Left cardiac atrium (tissue), 4 donors: ENCODE measurements at regions of chr3 and their contacts with region 1.

Region 1: DNA sequence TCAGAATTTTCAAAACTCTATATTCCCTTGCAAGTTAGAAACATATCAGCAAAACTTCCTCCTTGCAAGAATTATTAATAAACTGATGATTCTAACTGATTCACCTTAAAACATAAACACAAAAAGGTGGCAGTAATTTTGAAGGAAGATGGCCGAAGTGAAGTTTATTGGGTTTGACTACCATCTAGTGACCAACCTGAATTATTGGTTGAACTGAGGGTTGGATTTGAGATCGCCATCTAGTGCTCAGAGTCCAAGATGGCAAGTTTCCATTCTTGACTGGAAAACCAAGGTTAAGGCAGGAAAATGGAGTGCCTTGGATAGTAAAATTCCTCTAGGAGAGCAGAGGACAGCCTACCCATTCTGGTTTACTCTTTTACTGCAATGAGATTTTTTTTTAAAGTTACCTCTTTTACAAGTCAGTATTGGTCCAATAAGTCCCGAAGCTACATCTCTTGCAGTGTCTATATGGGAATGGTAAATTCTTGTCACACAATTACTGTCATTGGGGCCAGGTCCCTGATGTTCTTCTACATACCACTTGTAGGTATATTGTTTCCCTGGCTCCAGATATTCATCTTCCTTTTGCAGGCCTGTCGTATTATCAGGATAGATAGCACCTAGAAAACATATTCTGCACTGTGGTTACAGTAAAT is 51.6 kb upstream of the CP start:
- DNase-seq: no peak
- ATAC-seq: peak; percentile 86

Region 2: DNA sequence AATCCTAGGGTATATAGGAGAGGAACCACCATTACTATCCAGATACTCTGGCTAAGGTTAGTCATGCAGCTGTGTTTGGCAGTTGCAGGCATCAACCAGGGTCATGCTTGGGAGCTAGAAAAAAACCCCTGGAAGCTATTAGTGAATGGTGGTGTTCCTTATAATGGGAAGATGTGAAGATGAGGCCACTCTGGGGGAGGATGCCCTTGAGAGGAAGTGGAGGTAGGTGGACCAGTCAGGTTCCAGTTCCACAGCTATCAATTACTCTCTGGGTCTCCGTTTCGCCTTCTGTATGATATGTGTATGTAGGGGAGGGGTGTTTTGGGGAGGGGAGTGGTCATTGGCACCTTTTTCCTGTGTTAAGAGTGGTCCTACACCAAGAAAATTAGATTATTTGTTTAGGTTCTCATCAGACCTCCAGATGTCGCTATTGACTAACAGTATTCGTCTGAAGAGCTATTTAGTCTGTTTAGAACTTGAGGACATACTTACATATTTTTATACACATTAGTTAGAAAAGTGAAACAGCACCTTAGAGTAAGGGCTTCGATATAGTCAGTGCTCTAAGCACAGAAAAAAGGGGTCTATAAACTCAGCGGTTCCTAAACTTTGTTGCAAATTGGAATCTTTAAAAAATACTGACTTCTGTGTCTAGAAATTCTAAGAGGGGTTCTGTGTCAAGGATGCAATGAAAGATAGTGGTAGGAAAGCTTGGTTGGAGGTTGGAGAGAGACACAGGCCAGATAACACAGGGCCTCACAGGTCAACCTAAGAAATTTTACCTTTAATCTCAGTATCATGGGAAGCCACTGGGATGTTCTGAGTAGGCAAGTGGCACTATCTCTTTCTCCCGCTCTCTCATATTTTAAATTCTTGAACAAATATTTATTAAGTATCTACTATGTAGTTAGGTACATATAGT is 152.9 kb before region 1 on chr3:
- intact Hi-C with region 1: loop called (anchors 1 to 5 kb)
- DNase-seq: no peak
- ATAC-seq: peak; percentile 56 to 78